Activated CD4-positive, alpha-beta T cell treated with anti-CD3 and anti-CD28 coated beads, Interleukin-2, amount 10 ng/mL, durations not matched to agents 7 days and 5 days (primary cell): ENCODE measurements at regions of chr3 and their contacts with region 1.

Region 1: DNA sequence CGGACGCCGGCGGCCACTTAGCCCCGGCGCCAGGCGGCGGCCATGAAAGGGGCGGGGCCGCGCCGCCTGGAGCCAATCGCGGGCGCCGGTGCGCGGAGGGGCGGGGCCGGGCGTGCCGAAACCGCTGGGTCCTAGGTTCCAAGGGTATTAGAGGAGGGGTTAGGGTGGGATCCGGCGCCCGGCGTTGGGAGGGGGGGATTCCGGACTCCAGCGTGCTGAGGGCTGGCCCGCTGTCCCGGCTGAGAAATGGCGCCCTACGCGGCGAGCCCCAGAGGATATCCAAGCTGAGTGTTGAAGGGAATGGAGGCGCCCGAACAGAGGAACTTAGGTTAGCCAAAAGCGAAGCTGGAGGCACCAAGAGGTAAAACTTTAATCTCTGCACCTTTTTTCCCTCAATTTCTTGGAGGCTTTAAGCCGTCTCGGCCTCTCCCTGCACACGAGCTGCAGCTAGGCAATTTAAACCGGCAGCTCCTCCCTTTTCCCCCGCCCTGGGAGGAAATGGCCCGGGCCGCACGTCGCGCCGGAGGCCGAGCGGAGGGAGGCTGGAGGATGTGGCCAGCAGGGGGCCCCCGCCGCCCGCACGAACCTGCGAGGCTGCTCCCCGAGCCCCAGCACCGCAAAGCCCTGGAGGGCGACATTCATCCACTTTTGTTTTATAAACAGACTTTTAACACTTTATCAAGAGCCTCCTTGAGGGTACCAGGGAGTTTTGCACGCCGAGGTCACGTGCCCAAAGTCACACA is at the start of gene XXYLT1:
- DNase-seq: peak; percentile 90
- H3K4me3 Mint-ChIP-seq: peak within 1 kb of the TSS; percentile 87
- H3K27ac Mint-ChIP-seq: peak within 1 kb of the TSS; percentile 92
- H3K4me1 Mint-ChIP-seq: peaks cover 22% of the 10 kb centered on the region
- H3K27me3 Mint-ChIP-seq: no peaks in the 10 kb centered on the region
- total RNA-seq, gene XXYLT1: 7.7 to 7.8 TPM

Region 2: DNA sequence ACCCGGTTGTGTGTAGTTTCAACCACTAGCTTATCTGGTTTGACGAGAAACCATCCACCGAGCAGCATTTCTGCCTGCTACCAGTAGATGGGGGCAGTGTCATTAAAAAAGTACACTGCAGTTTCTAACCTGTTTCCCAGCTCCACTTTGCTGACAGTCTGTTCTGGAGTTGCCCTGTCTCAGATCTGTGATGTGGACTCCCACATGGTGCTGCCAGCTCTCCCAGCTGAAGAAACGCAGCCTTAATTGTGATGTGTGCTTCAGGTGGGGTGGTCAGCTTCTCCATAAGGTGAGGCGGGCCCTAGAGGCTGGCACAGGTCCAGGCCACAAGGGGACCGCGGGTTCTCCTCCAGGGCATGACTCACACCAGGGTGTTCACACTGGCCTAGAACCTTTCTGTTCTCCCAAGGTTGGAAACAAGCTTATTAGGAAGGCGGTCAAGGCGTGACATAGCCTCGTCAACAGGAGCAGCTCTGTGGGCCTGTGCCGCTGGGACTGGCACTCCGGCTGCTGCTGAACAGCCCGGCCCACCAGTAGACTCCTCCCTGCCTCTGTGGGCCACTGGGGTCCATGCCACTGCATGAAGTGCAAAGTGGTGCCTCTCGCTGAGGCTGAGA is 588.5 kb before region 1 on chr3:
- CTCF ChIA-PET with region 1: interaction called, 14 read pairs
- POLR2A ChIA-PET with region 1: no interaction called
- DNase-seq: peak; percentile 77
- H3K4me3 Mint-ChIP-seq: no peak overlapping the region
- H3K27ac Mint-ChIP-seq: no peak overlapping the region
- H3K4me1 Mint-ChIP-seq: peaks cover 40% of the 10 kb centered on the region
- H3K27me3 Mint-ChIP-seq: peaks cover 44% of the 10 kb centered on the region

Region 3: GRCh38 chr3:195172039-195172684 is 99.1 kb before region 1 on chr3:
- CTCF ChIA-PET with region 1: no interaction called
- POLR2A ChIA-PET with region 1: no interaction called
- DNase-seq: no peak
- H3K4me3 Mint-ChIP-seq: no peak overlapping the region
- H3K27ac Mint-ChIP-seq: no peak overlapping the region
- H3K4me1 Mint-ChIP-seq: peaks cover 1% of the 10 kb centered on the region
- H3K27me3 Mint-ChIP-seq: no peaks in the 10 kb centered on the region

Region 4: GRCh38 chr3:195508185-195508584 is 236.9 kb after region 1 on chr3:
- CTCF ChIA-PET with region 1: interaction called, 17 read pairs
- POLR2A ChIA-PET with region 1: no interaction called
- DNase-seq: no peak
- H3K4me3 Mint-ChIP-seq: no peak overlapping the region
- H3K27ac Mint-ChIP-seq: no peak overlapping the region
- H3K4me1 Mint-ChIP-seq: peaks cover 5% of the 10 kb centered on the region
- H3K27me3 Mint-ChIP-seq: no peaks in the 10 kb centered on the region

Region 5: GRCh38 chr3:195522254-195523023 is 251.2 kb after region 1 on chr3:
- CTCF ChIA-PET with region 1: interaction called, 68 read pairs
- POLR2A ChIA-PET with region 1: no interaction called
- DNase-seq: peak; percentile 55
- H3K4me3 Mint-ChIP-seq: no peak overlapping the region
- H3K27ac Mint-ChIP-seq: no peak overlapping the region
- H3K4me1 Mint-ChIP-seq: peaks cover 35% of the 10 kb centered on the region
- H3K27me3 Mint-ChIP-seq: no peaks in the 10 kb centered on the region